Pancreas (tissue), 10 donors: ENCODE measurements at regions of chr20 and their contacts with region 1.

Region 1: GRCh38 chr20:23606652-23607049 is 934 bp upstream of the CST9 start:
- DNase-seq: peak; percentile 49 to 88 (median 70)
- ATAC-seq: peak; percentile 84 to 98 (median 96)
- H3K4me3 ChIP-seq: no peak overlapping the region
- H3K27ac ChIP-seq: no peak overlapping the region
- H3K4me1 ChIP-seq: no peaks in the 10 kb centered on the region
- H3K27me3 ChIP-seq: no peaks in the 10 kb centered on the region
- CTCF ChIP-seq: peak; percentile 61 to 85 (median 82)

Region 2: GRCh38 chr20:23441850-23442313 is 164.8 kb before region 1 on chr20:
- intact Hi-C with region 1: loop called in 2 of 3 experiments (anchors 5 to 10 kb)
- DNase-seq: peak in 4 of 6 donors; percentile 10 to 66 (median 46)
- ATAC-seq: peak; percentile 56 to 88 (median 76)
- H3K4me3 ChIP-seq: no peak overlapping the region
- H3K27ac ChIP-seq: no peak overlapping the region
- H3K4me1 ChIP-seq: no peaks in the 10 kb centered on the region
- H3K27me3 ChIP-seq: no peaks in the 10 kb centered on the region
- CTCF ChIP-seq: peak; percentile 76 to 81 (median 78)

Region 3: DNA sequence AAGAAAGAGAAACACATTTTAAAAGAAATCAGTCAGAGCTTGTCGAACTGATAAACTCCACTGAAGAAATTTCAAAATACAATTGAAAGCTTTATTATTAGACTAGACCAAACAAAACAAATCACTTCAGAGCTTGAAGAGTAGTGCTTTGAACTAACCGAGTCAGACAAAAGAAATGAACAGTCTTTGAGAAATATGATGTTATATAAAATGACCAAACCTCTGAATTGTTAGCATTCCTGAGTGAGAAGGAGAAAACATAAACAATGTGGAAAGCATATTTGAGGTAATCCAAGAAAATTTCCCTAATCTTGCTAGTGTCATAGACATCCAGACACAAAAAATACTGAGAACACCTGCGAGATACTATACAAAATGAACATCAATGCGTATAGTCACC is 95.4 kb after region 1 on chr20:
- intact Hi-C with region 1: no loop called
- DNase-seq: no peak
- ATAC-seq: no peak
- H3K4me3 ChIP-seq: no peak overlapping the region
- H3K27ac ChIP-seq: no peak overlapping the region
- H3K4me1 ChIP-seq: no peaks in the 10 kb centered on the region
- H3K27me3 ChIP-seq: no peaks in the 10 kb centered on the region
- CTCF ChIP-seq: no peak